CD4-positive, alpha-beta T cell (primary cell): ENCODE measurements at regions of chr3 and their contacts with region 1.

Region 1: DNA sequence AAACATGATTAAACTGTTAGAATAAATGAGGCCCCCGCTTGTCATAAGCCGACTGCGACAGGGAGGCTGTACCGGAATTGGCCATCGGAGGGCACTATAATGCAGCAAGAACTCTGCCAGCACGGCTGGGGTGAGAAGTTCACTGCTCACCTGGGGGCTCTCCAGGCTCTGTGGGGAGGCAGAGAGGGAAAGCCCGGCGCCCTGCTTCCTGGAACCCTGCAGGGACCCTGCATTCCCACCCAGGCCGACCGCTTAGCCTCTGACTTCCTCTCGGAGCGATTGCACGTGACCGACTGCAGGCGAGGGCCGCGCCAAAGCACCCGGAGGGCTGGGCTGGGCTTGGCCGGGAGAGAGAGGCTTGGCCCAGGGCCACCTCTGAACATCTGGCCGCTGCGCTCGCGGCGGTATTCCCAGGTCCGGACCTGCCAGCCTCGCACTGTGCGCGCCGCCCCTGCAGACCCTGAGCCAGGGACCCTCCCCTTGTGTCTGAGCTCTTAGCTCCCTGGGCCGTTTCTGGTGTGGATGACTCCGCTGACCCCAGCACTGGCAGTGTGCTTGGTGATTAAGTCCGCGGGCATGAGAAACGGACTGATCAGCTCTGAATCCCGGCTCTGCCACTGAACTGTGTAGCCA is 26.2 kb downstream of the DRD3 start:
- DNase-seq: peak; percentile 73 to 89 (median 83)
- ATAC-seq: peak; percentile 98
- H3K4me3 ChIP-seq: peak overlapping the region; percentile 57
- H3K4me3 Mint-ChIP-seq: peak overlapping the region; percentile 43
- H3K27ac ChIP-seq: no peak overlapping the region
- H3K27ac Mint-ChIP-seq: no peak overlapping the region
- H3K4me1 ChIP-seq: peaks cover 7% of the 10 kb centered on the region
- H3K4me1 Mint-ChIP-seq: peaks cover 5% of the 10 kb centered on the region
- H3K27me3 ChIP-seq: no peaks in the 10 kb centered on the region
- H3K27me3 Mint-ChIP-seq: no peaks in the 10 kb centered on the region
- CTCF ChIP-seq: peak; percentile 90

Region 2: GRCh38 chr3:113329757-113330156 is 822.9 kb before region 1 on chr3:
- CTCF ChIA-PET with region 1: no interaction called
- POLR2A ChIA-PET with region 1: no interaction called
- intact Hi-C with region 1: no loop called
- DNase-seq: no peak
- ATAC-seq: no peak
- H3K4me3 ChIP-seq: no peak overlapping the region
- H3K4me3 Mint-ChIP-seq: no peak overlapping the region
- H3K27ac ChIP-seq: no peak overlapping the region
- H3K27ac Mint-ChIP-seq: no peak overlapping the region
- H3K4me1 ChIP-seq: no peaks in the 10 kb centered on the region
- H3K4me1 Mint-ChIP-seq: no peaks in the 10 kb centered on the region
- H3K27me3 ChIP-seq: no peaks in the 10 kb centered on the region
- H3K27me3 Mint-ChIP-seq: no peaks in the 10 kb centered on the region
- CTCF ChIP-seq: no peak

Region 3: DNA sequence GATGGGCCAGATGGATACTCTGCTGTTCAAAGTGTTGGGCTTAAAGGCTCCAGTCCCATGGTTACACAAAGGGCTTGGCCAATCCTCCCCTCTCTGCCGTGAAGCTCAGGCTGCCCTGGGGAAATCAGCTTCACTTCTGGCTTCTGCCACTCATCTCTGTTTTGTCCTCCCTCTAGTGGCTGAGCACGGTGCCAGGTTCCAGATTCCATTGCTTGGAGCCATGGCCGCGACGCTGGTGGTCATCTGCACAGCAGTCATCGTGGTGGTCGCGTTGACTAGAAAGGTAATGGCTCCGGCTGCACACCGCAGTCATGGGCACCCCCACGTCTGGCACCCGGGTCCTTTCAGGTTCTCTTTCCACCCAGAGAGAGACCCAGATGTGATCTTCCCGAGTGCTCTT is 146.8 kb after region 1 on chr3:
- CTCF ChIA-PET with region 1: interaction called, 25 read pairs
- POLR2A ChIA-PET with region 1: no interaction called
- intact Hi-C with region 1: loop called (anchors 1 kb)
- DNase-seq: peak in 8 of 14 experiments; percentile 12 to 73 (median 46)
- ATAC-seq: peak; percentile 45
- H3K4me3 ChIP-seq: peak overlapping the region; percentile 22
- H3K4me3 Mint-ChIP-seq: no peak overlapping the region
- H3K27ac ChIP-seq: no peak overlapping the region
- H3K27ac Mint-ChIP-seq: peak overlapping the region; percentile 43
- H3K4me1 ChIP-seq: peaks cover 32% of the 10 kb centered on the region
- H3K4me1 Mint-ChIP-seq: peaks cover 16% of the 10 kb centered on the region
- H3K27me3 ChIP-seq: no peaks in the 10 kb centered on the region
- H3K27me3 Mint-ChIP-seq: no peaks in the 10 kb centered on the region
- CTCF ChIP-seq: peak; percentile 62

Region 4: GRCh38 chr3:114336122-114336697 is 183.6 kb after region 1 on chr3:
- CTCF ChIA-PET with region 1: no interaction called
- POLR2A ChIA-PET with region 1: no interaction called
- intact Hi-C with region 1: loop called (anchors 1 to 2 kb)
- DNase-seq: no peak
- ATAC-seq: no peak
- H3K4me3 ChIP-seq: no peak overlapping the region
- H3K4me3 Mint-ChIP-seq: no peak overlapping the region
- H3K27ac ChIP-seq: no peak overlapping the region
- H3K27ac Mint-ChIP-seq: peak overlapping the region; percentile 4
- H3K4me1 ChIP-seq: peaks cover 30% of the 10 kb centered on the region
- H3K4me1 Mint-ChIP-seq: peaks cover 35% of the 10 kb centered on the region
- H3K27me3 ChIP-seq: no peaks in the 10 kb centered on the region
- H3K27me3 Mint-ChIP-seq: no peaks in the 10 kb centered on the region
- CTCF ChIP-seq: peak; percentile 47

Region 5: GRCh38 chr3:114418724-114419543 is 266.3 kb after region 1 on chr3:
- CTCF ChIA-PET with region 1: interaction called, 17 read pairs
- POLR2A ChIA-PET with region 1: interaction called, 5 read pairs
- intact Hi-C with region 1: loop called (anchors 1 kb)
- DNase-seq: peak in 4 of 14 experiments; percentile 6 to 79 (median 78)
- ATAC-seq: peak; percentile 92
- H3K4me3 ChIP-seq: no peak overlapping the region
- H3K4me3 Mint-ChIP-seq: no peak overlapping the region
- H3K27ac ChIP-seq: no peak overlapping the region
- H3K27ac Mint-ChIP-seq: no peak overlapping the region
- H3K4me1 ChIP-seq: no peaks in the 10 kb centered on the region
- H3K4me1 Mint-ChIP-seq: peaks cover 6% of the 10 kb centered on the region
- H3K27me3 ChIP-seq: no peaks in the 10 kb centered on the region
- H3K27me3 Mint-ChIP-seq: no peaks in the 10 kb centered on the region
- CTCF ChIP-seq: peak; percentile 86

Region 6: GRCh38 chr3:115819785-115820384 is 1667.2 kb after region 1 on chr3:
- CTCF ChIA-PET with region 1: no interaction called
- POLR2A ChIA-PET with region 1: no interaction called
- intact Hi-C with region 1: loop called (anchors 10 kb)
- DNase-seq: peak; percentile 18 to 89 (median 40)
- ATAC-seq: peak; percentile 95
- H3K4me3 ChIP-seq: no peak overlapping the region
- H3K4me3 Mint-ChIP-seq: no peak overlapping the region
- H3K27ac ChIP-seq: no peak overlapping the region
- H3K27ac Mint-ChIP-seq: no peak overlapping the region
- H3K4me1 ChIP-seq: no peaks in the 10 kb centered on the region
- H3K4me1 Mint-ChIP-seq: no peaks in the 10 kb centered on the region
- H3K27me3 ChIP-seq: no peaks in the 10 kb centered on the region
- H3K27me3 Mint-ChIP-seq: no peaks in the 10 kb centered on the region
- CTCF ChIP-seq: peak; percentile 100